ENCODE measurements at regions of chr5 and their contacts with region 1.

Region 1: GRCh38 chr5:124649491-124650146 is 96.8 kb downstream of the ZNF608 start:
- DNase-seq: peak; percentile 98
- H3K4me3 ChIP-seq: peak overlapping the region in 2 of 3 experiments; percentile 17 to 49
- H3K27ac ChIP-seq: peak overlapping the region; percentile 92
- H3K4me1 ChIP-seq: peaks cover 46% of the 10 kb centered on the region
- H3K27me3 ChIP-seq: no peaks in the 10 kb centered on the region
- CTCF ChIP-seq: no peak
- POLR2A ChIP-seq: peak; percentile 60

Region 2: DNA sequence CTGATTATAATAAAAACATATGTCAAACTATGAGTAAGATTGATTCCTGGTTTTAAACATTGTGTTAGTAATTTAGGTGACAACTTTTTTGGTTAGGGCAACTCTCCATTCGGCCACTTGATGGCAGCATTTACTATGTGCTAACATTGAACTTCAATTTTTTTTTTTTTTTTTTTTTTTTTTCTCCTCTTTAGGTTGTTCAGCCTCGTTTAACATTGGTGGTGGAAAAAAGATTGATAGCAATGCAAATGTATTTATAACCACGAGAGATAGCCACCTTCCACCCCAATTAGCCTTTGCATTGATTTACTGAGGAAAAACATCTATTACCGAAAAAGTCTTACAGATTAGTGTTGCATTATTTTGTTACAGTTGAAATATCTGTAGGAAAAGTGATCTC is 978.6 kb before region 1 on chr5:
- CTCF ChIA-PET with region 1: no interaction called
- POLR2A ChIA-PET with region 1: no interaction called
- dilution Hi-C with region 1: no loop called
- intact Hi-C with region 1: loop called (anchors 2 kb)
- DNase-seq: peak; percentile 68
- H3K4me3 ChIP-seq: no peak overlapping the region
- H3K27ac ChIP-seq: no peak overlapping the region
- H3K4me1 ChIP-seq: no peaks in the 10 kb centered on the region
- H3K27me3 ChIP-seq: no peaks in the 10 kb centered on the region
- CTCF ChIP-seq: peak; percentile 52 to 57
- POLR2A ChIP-seq: no peak

Region 3: GRCh38 chr5:123937230-123937629 is 712.4 kb before region 1 on chr5:
- CTCF ChIA-PET with region 1: no interaction called
- POLR2A ChIA-PET with region 1: no interaction called
- dilution Hi-C with region 1: no loop called
- intact Hi-C with region 1: loop called (anchors 1 kb)
- DNase-seq: peak; percentile 68
- H3K4me3 ChIP-seq: no peak overlapping the region
- H3K27ac ChIP-seq: no peak overlapping the region
- H3K4me1 ChIP-seq: no peaks in the 10 kb centered on the region
- H3K27me3 ChIP-seq: no peaks in the 10 kb centered on the region
- CTCF ChIP-seq: peak; percentile 51 to 62
- POLR2A ChIP-seq: no peak

Region 4: GRCh38 chr5:124605541-124605940 is 44.1 kb before region 1 on chr5:
- CTCF ChIA-PET with region 1: no interaction called
- POLR2A ChIA-PET with region 1: interaction called, 3 read pairs
- dilution Hi-C with region 1: no loop called
- intact Hi-C with region 1: loop called (anchors 1 kb)
- DNase-seq: peak; percentile 97
- H3K4me3 ChIP-seq: no peak overlapping the region
- H3K27ac ChIP-seq: peak overlapping the region; percentile 86
- H3K4me1 ChIP-seq: peaks cover 44% of the 10 kb centered on the region
- H3K27me3 ChIP-seq: no peaks in the 10 kb centered on the region
- CTCF ChIP-seq: no peak
- POLR2A ChIP-seq: no peak

Region 5: GRCh38 chr5:124996764-124997077 is 347.1 kb after region 1 on chr5:
- CTCF ChIA-PET with region 1: no interaction called
- POLR2A ChIA-PET with region 1: no interaction called
- dilution Hi-C with region 1: no loop called
- intact Hi-C with region 1: loop called (anchors 1 kb)
- DNase-seq: peak; percentile 68
- H3K4me3 ChIP-seq: no peak overlapping the region
- H3K27ac ChIP-seq: no peak overlapping the region
- H3K4me1 ChIP-seq: peaks cover 8% of the 10 kb centered on the region
- H3K27me3 ChIP-seq: no peaks in the 10 kb centered on the region
- CTCF ChIP-seq: no peak
- POLR2A ChIP-seq: no peak

Region 6: GRCh38 chr5:125134216-125135081 is 484.8 kb after region 1 on chr5:
- CTCF ChIA-PET with region 1: no interaction called
- POLR2A ChIA-PET with region 1: no interaction called
- dilution Hi-C with region 1: no loop called
- intact Hi-C with region 1: no loop called
- DNase-seq: peak; percentile 30
- H3K4me3 ChIP-seq: no peak overlapping the region
- H3K27ac ChIP-seq: no peak overlapping the region
- H3K4me1 ChIP-seq: peaks cover 2% of the 10 kb centered on the region
- H3K27me3 ChIP-seq: no peaks in the 10 kb centered on the region
- CTCF ChIP-seq: no peak
- POLR2A ChIP-seq: no peak

Region 7: GRCh38 chr5:125412561-125413495 is 763.2 kb after region 1 on chr5:
- CTCF ChIA-PET with region 1: interaction called, 7 read pairs
- POLR2A ChIA-PET with region 1: interaction called, 4 read pairs
- dilution Hi-C with region 1: no loop called
- intact Hi-C with region 1: loop called (anchors 1 kb)
- DNase-seq: peak; percentile 93
- H3K4me3 ChIP-seq: no peak overlapping the region
- H3K27ac ChIP-seq: peak overlapping the region; percentile 99
- H3K4me1 ChIP-seq: peaks cover 54% of the 10 kb centered on the region
- H3K27me3 ChIP-seq: no peaks in the 10 kb centered on the region
- CTCF ChIP-seq: peak; percentile 58 to 66
- POLR2A ChIP-seq: no peak

Region 8: GRCh38 chr5:126594676-126595485 is 1945.3 kb after region 1 on chr5 and contains the start of gene ALDH7A1:
- CTCF ChIA-PET with region 1: no interaction called
- POLR2A ChIA-PET with region 1: no interaction called
- dilution Hi-C with region 1: no loop called
- intact Hi-C with region 1: loop called (anchors 2 kb)
- DNase-seq: peak; percentile 96
- H3K4me3 ChIP-seq: peak within 1 kb of the TSS; percentile 49 to 60 (median 58)
- H3K27ac ChIP-seq: peak within 1 kb of the TSS; percentile 68
- H3K4me1 ChIP-seq: peaks cover 27% of the 10 kb centered on the region
- H3K27me3 ChIP-seq: no peaks in the 10 kb centered on the region
- CTCF ChIP-seq: peak; percentile 58 to 65
- POLR2A ChIP-seq: peak; percentile 94
- total RNA-seq, gene ALDH7A1: 75.7 and 103 TPM in 2 replicates

Measured in endothelial cell of umbilical vein (primary cell).